Right lobe of liver (tissue), 6 donors: ENCODE measurements at regions of chr12 and their contacts with region 1.

Region 1: GRCh38 chr12:65565601-65566560 is 258.4 kb upstream of the HMGA2 start:
- DNase-seq: no peak
- ATAC-seq: no peak
- H3K4me3 ChIP-seq: no peak overlapping the region
- H3K27ac ChIP-seq: no peak overlapping the region
- H3K4me1 ChIP-seq: no peaks in the 10 kb centered on the region
- H3K27me3 ChIP-seq: no peaks in the 10 kb centered on the region
- CTCF ChIP-seq: no peak
- POLR2A ChIP-seq: no peak

Region 2: GRCh38 chr12:65313719-65314317 is 252.1 kb before region 1 on chr12:
- intact Hi-C with region 1: loop called in 1 of 2 experiments (anchors 10 kb)
- DNase-seq: no peak
- ATAC-seq: peak in 3 of 4 donors; percentile 47 to 53 (median 49)
- H3K4me3 ChIP-seq: no peak overlapping the region
- H3K27ac ChIP-seq: no peak overlapping the region
- H3K4me1 ChIP-seq: no peaks in the 10 kb centered on the region
- H3K27me3 ChIP-seq: no peaks in the 10 kb centered on the region
- CTCF ChIP-seq: peak; percentile 49 to 62 (median 54)
- POLR2A ChIP-seq: no peak